GM12878 (cell line): ENCODE measurements at regions of chr3 and their contacts with region 1.

Region 1: DNA sequence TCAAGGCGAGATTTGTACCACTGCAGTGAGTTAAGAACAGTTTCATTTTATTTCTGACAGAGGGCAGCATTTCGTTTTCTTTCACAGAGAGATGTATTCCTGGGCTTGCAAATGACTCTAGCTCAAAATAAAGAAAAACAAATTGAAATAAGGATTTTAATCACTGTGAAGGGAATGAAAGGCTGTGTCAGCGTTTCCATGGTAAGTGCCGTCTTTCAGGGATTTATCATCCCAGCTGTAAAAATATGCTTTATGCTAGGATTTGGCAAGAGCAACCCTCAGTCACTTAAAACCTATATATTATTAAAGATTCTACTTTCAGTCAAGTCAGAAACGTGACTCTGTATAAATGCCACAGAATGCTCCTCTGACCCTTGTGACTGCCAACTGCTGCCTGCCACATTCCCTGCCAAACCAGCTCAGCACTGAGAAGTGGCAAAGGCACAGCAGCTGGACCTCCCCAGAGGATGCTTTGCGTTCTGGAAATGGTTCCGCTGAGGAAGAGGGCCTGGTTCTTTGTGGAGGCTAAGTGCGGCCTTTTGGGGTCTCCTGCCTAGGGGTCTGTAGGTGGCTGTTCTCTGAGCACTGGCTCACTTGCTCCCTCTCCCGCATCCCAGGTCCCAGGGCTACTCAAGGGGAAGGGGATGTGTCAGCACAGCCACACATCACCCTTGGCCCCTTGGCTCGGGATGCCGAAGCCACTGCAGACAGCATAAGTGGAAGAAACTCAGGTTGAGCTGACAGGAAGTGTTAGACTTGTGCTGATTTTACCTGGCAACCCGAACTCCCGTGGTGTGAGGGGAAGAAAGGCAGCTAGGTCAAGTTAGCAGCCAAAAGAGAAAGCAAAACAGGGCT is 56.6 kb upstream of the POMGNT2 start:
- DNase-seq: no peak
- ATAC-seq: peak; percentile 86
- H3K4me3 ChIP-seq: no peak overlapping the region
- H3K27ac ChIP-seq: no peak overlapping the region
- H3K4me1 ChIP-seq: no peaks in the 10 kb centered on the region; the same call in 1 of the 2 replicates
- H3K27me3 ChIP-seq: no peaks in the 10 kb centered on the region
- CTCF ChIP-seq: peak; percentile 12 to 55 (median 19); a peak in 3 of 6 replicates
- EP300 ChIP-seq: no peak
- POLR2A ChIP-seq: no peak
- RAD21 ChIP-seq: peak; percentile 63

Region 2: GRCh38 chr3:42871592-42872196 is 290.8 kb before region 1 on chr3:
- CTCF ChIA-PET with region 1: no interaction called
- POLR2A ChIA-PET with region 1: no interaction called
- RAD21 ChIA-PET with region 1: no interaction called
- SMC1A ChIA-PET with region 1: no interaction called
- in situ Hi-C with region 1: no loop called
- intact Hi-C with region 1: no loop called
- DNase-seq: no peak
- ATAC-seq: no peak
- H3K4me3 ChIP-seq: no peak overlapping the region
- H3K27ac ChIP-seq: no peak overlapping the region
- H3K4me1 ChIP-seq: no peaks in the 10 kb centered on the region
- H3K27me3 ChIP-seq: no peaks in the 10 kb centered on the region
- CTCF ChIP-seq: no peak
- EP300 ChIP-seq: no peak
- POLR2A ChIP-seq: no peak
- RAD21 ChIP-seq: no peak

Region 3: GRCh38 chr3:43180027-43180426 is 17.6 kb after region 1 on chr3:
- CTCF ChIA-PET with region 1: interaction called, 3 read pairs
- POLR2A ChIA-PET with region 1: interaction called, 3 read pairs
- RAD21 ChIA-PET with region 1: interaction called, 6 read pairs
- SMC1A ChIA-PET with region 1: interaction called, 11 read pairs
- in situ Hi-C with region 1: no loop called
- intact Hi-C with region 1: no loop called
- DNase-seq: peak; percentile 26
- ATAC-seq: peak; percentile 75
- H3K4me3 ChIP-seq: no peak overlapping the region
- H3K27ac ChIP-seq: peak overlapping the region; percentile 53
- H3K4me1 ChIP-seq: peaks cover 20% of the 10 kb centered on the region
- H3K27me3 ChIP-seq: no peaks in the 10 kb centered on the region
- CTCF ChIP-seq: no peak
- EP300 ChIP-seq: no peak
- POLR2A ChIP-seq: no peak
- RAD21 ChIP-seq: no peak

Region 4: DNA sequence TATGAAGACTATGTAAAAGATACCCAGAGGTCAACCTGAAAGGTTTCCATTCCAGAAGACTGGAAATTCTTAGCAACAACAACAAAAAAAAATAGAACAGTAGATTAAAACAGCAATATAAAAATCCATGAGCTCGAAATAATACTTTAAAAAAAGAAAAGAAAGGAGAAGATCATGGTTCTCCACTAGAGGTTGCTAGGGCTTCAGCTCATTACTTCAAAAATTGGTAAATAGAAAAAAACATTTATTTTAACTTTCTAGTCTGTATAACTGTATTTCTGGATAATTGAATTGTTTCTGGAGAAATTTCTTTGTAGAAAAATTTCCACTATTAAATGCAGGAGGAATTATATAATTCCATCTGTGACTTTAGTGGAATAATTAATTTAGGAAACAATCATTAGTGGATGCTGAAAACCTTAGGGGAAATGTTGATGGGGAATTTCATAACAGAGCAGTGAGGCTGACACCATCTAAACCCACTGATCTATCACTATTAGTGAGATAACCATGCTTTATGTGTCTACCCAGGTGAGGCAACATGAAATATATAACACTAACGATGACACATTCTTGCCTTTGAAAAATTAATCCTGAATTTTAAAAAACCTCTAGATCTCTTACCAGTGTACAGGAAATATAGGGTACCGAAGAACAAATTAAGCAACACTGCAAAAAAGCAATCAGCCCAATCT is 61.4 kb after region 1 on chr3:
- CTCF ChIA-PET with region 1: interaction called, 4 read pairs
- POLR2A ChIA-PET with region 1: no interaction called
- RAD21 ChIA-PET with region 1: interaction called, 7 read pairs
- SMC1A ChIA-PET with region 1: interaction called, 3 read pairs
- in situ Hi-C with region 1: no loop called
- intact Hi-C with region 1: loop called (anchors 5 kb)
- DNase-seq: no peak
- ATAC-seq: peak; percentile 52; the same call in 2 of the 3 replicates
- H3K4me3 ChIP-seq: no peak overlapping the region
- H3K27ac ChIP-seq: no peak overlapping the region
- H3K4me1 ChIP-seq: no peaks in the 10 kb centered on the region
- H3K27me3 ChIP-seq: no peaks in the 10 kb centered on the region
- CTCF ChIP-seq: peak in 1 of 3 experiments; percentile 14; a peak in 1 of 6 replicates
- EP300 ChIP-seq: no peak
- POLR2A ChIP-seq: no peak
- RAD21 ChIP-seq: peak; percentile 44

Region 5: GRCh38 chr3:43296565-43296964 is 134.1 kb after region 1 on chr3:
- CTCF ChIA-PET with region 1: interaction called, 13 read pairs
- POLR2A ChIA-PET with region 1: no interaction called
- RAD21 ChIA-PET with region 1: interaction called, 6 read pairs
- SMC1A ChIA-PET with region 1: interaction called, 10 read pairs
- in situ Hi-C with region 1: no loop called
- intact Hi-C with region 1: no loop called
- DNase-seq: no peak
- ATAC-seq: peak; percentile 90
- H3K4me3 ChIP-seq: 0 out of 2 replicates have a peak overlapping the region, but pooled peaks have one; percentile 1
- H3K27ac ChIP-seq: no peak overlapping the region
- H3K4me1 ChIP-seq: peaks cover 15% of the 10 kb centered on the region
- H3K27me3 ChIP-seq: no peaks in the 10 kb centered on the region
- CTCF ChIP-seq: no peak
- EP300 ChIP-seq: no peak
- POLR2A ChIP-seq: no peak
- RAD21 ChIP-seq: no peak

Region 6: GRCh38 chr3:43503067-43503728 is 340.7 kb after region 1 on chr3:
- CTCF ChIA-PET with region 1: interaction called, 81 read pairs
- POLR2A ChIA-PET with region 1: no interaction called
- RAD21 ChIA-PET with region 1: interaction called, 8 read pairs
- SMC1A ChIA-PET with region 1: interaction called, 38 read pairs
- in situ Hi-C with region 1: no loop called
- intact Hi-C with region 1: loop called (anchors 5 kb)
- DNase-seq: no peak
- ATAC-seq: peak; percentile 77
- H3K4me3 ChIP-seq: no peak overlapping the region
- H3K27ac ChIP-seq: no peak overlapping the region
- H3K4me1 ChIP-seq: no peaks in the 10 kb centered on the region
- H3K27me3 ChIP-seq: no peaks in the 10 kb centered on the region
- CTCF ChIP-seq: peak; percentile 26 to 40 (median 33); a peak in 5 of 6 replicates
- EP300 ChIP-seq: no peak
- POLR2A ChIP-seq: no peak
- RAD21 ChIP-seq: peak; percentile 45